IMR-90 (cell line): ENCODE measurements at regions of chr4 and their contacts with region 1.

Region 1: GRCh38 chr4:42104521-42104920 is 47.9 kb downstream of the BEND4 start:
- DNase-seq: peak; percentile 70
- ATAC-seq: peak; percentile 81
- H3K4me3 ChIP-seq: no peak overlapping the region
- H3K27ac ChIP-seq: no peak overlapping the region
- H3K4me1 ChIP-seq: no peaks in the 10 kb centered on the region
- H3K27me3 ChIP-seq: no peaks in the 10 kb centered on the region
- CTCF ChIP-seq: no peak
- POLR2A ChIP-seq: no peak
- RAD21 ChIP-seq: no peak

Region 2: GRCh38 chr4:40710502-40711254 is 1393.8 kb before region 1 on chr4:
- CTCF ChIA-PET with region 1: no interaction called
- POLR2A ChIA-PET with region 1: no interaction called
- dilution Hi-C with region 1: no loop called
- in situ Hi-C with region 1: no loop called
- intact Hi-C with region 1: no loop called
- DNase-seq: peak; percentile 37
- ATAC-seq: peak; percentile 37; the same call in 1 of the 2 replicates
- H3K4me3 ChIP-seq: no peak overlapping the region
- H3K27ac ChIP-seq: no peak overlapping the region
- H3K4me1 ChIP-seq: no peaks in the 10 kb centered on the region
- H3K27me3 ChIP-seq: no peaks in the 10 kb centered on the region; the same call in 1 of the 2 replicates
- CTCF ChIP-seq: no peak
- POLR2A ChIP-seq: no peak
- RAD21 ChIP-seq: no peak

Region 3: GRCh38 chr4:42144028-42144427 is 39.5 kb after region 1 on chr4:
- CTCF ChIA-PET with region 1: no interaction called
- POLR2A ChIA-PET with region 1: no interaction called
- dilution Hi-C with region 1: no loop called
- in situ Hi-C with region 1: no loop called
- intact Hi-C with region 1: loop called (anchors 2 kb)
- DNase-seq: no peak
- ATAC-seq: no peak
- H3K4me3 ChIP-seq: no peak overlapping the region
- H3K27ac ChIP-seq: no peak overlapping the region
- H3K4me1 ChIP-seq: no peaks in the 10 kb centered on the region
- H3K27me3 ChIP-seq: peaks cover 2% of the 10 kb centered on the region; the same call in 1 of the 2 replicates
- CTCF ChIP-seq: no peak
- POLR2A ChIP-seq: no peak
- RAD21 ChIP-seq: no peak